Endothelial cell of umbilical vein (primary cell): ENCODE measurements at regions of chr15 and their contacts with region 1.

Region 1: DNA sequence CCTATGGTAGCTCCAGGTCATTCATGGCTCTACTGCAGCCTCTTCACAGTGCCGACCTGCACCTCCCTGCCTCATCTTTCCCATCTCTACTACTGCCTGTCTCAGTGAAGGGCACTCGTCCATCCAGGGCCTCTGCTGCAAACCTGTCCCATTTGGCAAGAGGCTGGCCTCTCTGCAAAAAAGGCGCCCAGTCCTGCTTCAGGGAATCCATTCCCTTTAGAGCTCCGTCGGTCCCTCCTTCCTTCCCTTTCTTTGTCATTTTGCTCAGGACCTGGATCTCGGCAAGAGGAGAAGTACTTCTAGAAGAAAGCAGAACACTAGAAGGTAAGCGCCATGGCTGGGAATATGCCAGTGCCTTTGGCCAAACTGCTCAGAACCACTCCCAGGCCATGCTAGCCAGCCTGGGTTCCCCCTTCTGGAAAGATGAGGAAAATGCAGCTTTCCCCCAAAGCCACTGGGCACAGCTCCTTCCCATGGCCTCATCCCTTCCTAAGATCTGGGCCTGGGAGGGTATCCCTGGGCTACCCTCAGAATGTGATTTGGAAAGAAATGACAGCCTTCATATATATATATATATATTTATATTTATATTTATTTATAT is 6.4 kb upstream of the ISL2 start:
- DNase-seq: peak; percentile 57
- H3K4me3 ChIP-seq: no peak overlapping the region
- H3K27ac ChIP-seq: no peak overlapping the region
- H3K4me1 ChIP-seq: no peaks in the 10 kb centered on the region
- H3K27me3 ChIP-seq: peaks cover 25 to 36% of the 10 kb centered on the region in 2 experiments
- CTCF ChIP-seq: peak; percentile 35 to 74
- POLR2A ChIP-seq: no peak

Region 2: GRCh38 chr15:76285239-76285825 is 44.8 kb before region 1 on chr15:
- CTCF ChIA-PET with region 1: interaction called, 12 read pairs
- POLR2A ChIA-PET with region 1: no interaction called
- dilution Hi-C with region 1: no loop called
- intact Hi-C with region 1: no loop called
- DNase-seq: peak; percentile 28
- H3K4me3 ChIP-seq: no peak overlapping the region
- H3K27ac ChIP-seq: no peak overlapping the region
- H3K4me1 ChIP-seq: no peaks in the 10 kb centered on the region
- H3K27me3 ChIP-seq: no peaks in the 10 kb centered on the region
- CTCF ChIP-seq: peak; percentile 37 to 55
- POLR2A ChIP-seq: no peak

Region 3: DNA sequence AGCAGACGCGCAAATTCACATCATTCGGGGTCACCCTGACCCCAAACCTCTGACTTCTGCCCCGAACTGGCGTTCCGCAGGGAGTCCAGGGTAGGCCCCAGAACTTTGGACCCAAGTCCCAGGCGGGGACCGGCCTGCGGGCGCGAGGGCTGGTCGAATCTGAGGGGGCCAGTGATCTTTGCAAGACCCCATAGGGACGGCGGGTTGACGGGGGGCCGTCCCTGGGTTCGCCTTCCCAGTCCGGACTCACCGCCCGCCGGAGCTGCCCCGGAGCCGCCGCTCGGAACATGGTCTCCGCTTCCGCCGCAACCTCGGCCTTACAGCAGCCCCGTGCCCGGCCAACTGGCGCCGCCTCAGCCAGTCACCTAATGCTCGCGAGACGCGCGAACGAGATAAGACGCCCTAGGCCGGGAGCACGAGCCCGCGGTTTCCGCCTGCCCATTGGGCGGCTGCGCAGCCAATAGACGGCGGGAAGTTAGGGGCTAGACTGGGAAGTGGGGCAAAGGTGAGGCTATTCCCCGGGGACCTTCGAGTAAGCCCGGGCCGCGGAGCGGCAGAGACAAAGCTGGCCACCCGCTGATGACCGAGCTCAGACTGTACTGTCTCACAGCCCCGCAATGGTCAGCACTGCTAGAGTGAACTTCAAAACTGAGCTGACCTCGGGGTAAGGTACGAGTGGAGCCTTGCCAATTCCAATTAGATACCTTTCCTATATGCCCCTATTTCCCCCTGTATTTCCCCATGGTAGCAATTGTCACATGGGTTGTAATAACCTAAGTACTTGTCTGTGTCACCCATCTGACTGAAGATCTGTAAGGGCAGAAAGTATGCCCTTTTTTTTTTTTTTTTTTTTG is 18.9 kb before region 1 on chr15 and contains the start of gene ETFA:
- CTCF ChIA-PET with region 1: interaction called, 10 read pairs
- POLR2A ChIA-PET with region 1: no interaction called
- dilution Hi-C with region 1: no loop called
- intact Hi-C with region 1: loop called (anchors 1 kb)
- DNase-seq: peak; percentile 95
- H3K4me3 ChIP-seq: peak within 1 kb of the TSS; percentile 82 to 86 (median 84)
- H3K27ac ChIP-seq: peak within 1 kb of the TSS; percentile 78
- H3K4me1 ChIP-seq: peaks cover 19% of the 10 kb centered on the region
- H3K27me3 ChIP-seq: no peaks in the 10 kb centered on the region
- CTCF ChIP-seq: no peak
- POLR2A ChIP-seq: peak; percentile 88
- total RNA-seq, gene ETFA: 116 and 123 TPM in 2 replicates